ENCODE measurements at regions of chr2 and their contacts with region 1.

Region 1: DNA sequence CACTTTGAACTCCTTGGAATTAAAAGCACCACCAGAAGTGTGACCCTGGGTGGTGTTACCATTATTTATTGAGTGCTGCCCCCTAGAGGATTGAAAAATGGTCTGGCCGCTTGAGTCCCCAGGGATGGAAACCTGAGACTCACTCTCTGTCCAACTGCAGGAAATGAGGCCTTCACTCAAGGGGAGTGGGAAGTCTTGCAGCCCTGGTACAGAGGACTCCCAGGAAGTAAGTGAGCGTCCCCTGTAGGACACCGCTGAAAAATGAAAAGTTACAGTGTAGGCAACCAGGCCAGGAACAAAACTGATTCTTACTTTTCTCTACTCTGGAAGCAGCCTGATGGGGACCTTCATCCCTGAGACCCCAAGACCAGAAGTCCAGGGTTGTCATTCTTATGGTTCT is 2.2 kb upstream of the NRP2 start:
- DNase-seq: peak in 7 of 9 donors; percentile 16 to 56 (median 39)
- ATAC-seq: peak; percentile 40
- H3K4me3 ChIP-seq: no peak overlapping the region
- H3K4me3 Mint-ChIP-seq: peak overlapping the region in 6 of 10 donors; percentile 2 to 68 (median 29)
- H3K27ac ChIP-seq: no peak overlapping the region
- H3K27ac Mint-ChIP-seq: peak overlapping the region in 1 of 9 donors; percentile 9
- H3K4me1 ChIP-seq: peaks cover 0 to 4% of the 10 kb centered on the region in 2 donors
- H3K4me1 Mint-ChIP-seq: peaks cover 16 to 43% (median 24%) of the 10 kb centered on the region in 7 donors
- H3K27me3 ChIP-seq: peaks cover 3 to 8% of the 10 kb centered on the region in 2 donors
- H3K27me3 Mint-ChIP-seq: peaks cover 40 to 55% (median 44%) of the 10 kb centered on the region in 5 donors

Region 2: GRCh38 chr2:204260162-204260877 is 1419.7 kb before region 1 on chr2:
- CTCF ChIA-PET with region 1: interaction called, 10 read pairs
- POLR2A ChIA-PET with region 1: no interaction called
- intact Hi-C with region 1: loop called (anchors 1 to 5 kb)
- DNase-seq: peak in 6 of 9 donors; percentile 30 to 47 (median 36)
- ATAC-seq: peak; percentile 60
- H3K4me3 ChIP-seq: no peak overlapping the region
- H3K4me3 Mint-ChIP-seq: no peak overlapping the region
- H3K27ac ChIP-seq: no peak overlapping the region
- H3K27ac Mint-ChIP-seq: no peak overlapping the region
- H3K4me1 ChIP-seq: no peaks in the 10 kb centered on the region
- H3K4me1 Mint-ChIP-seq: peaks cover 0 to 2% (median 0%) of the 10 kb centered on the region in 7 donors
- H3K27me3 ChIP-seq: peaks cover 2 to 3% of the 10 kb centered on the region in 2 donors
- H3K27me3 Mint-ChIP-seq: peaks cover 20 to 58% (median 26%) of the 10 kb centered on the region in 5 donors

Region 3: DNA sequence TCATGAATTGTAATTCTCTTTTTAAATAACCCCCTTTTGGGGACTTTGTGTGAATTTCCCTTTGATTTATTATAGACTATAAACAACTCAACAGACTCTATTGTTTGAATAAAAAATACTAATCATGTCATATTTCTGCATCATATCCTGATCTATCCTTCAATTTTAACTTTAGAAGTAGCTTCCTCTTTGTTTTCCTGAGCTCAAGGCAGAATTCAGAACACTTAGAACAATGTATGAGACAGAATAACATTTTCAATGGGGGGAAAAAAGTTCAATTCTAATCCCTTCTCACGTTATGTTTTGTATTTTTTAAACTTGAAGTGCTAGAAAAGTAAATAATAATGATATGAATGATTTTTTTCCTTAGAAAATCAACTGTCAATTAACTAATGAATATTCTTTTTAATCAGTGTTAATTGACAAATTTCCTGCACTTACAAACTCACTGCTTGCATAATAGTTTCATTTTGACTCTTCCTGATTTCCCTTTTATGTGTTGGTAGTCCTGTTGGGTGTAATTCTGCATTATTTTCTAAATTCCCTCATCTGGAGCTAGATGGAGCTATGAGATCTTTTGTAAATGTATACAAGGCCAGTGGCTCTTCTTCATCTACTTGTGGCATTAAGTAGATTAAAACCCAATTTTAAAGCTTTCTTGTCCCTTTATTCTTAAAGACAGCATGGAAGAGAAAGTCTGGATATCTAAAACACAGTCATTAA is 808.7 kb before region 1 on chr2:
- CTCF ChIA-PET with region 1: interaction called, 48 read pairs
- POLR2A ChIA-PET with region 1: interaction called, 3 read pairs
- intact Hi-C with region 1: loop called (anchors 1 kb)
- DNase-seq: peak in 6 of 9 donors; percentile 30 to 66 (median 53)
- ATAC-seq: peak; percentile 61
- H3K4me3 ChIP-seq: no peak overlapping the region
- H3K4me3 Mint-ChIP-seq: peak overlapping the region in 5 of 10 donors; percentile 0 to 19 (median 1)
- H3K27ac ChIP-seq: no peak overlapping the region
- H3K27ac Mint-ChIP-seq: peak overlapping the region in 7 of 9 donors; percentile 0 to 44 (median 12)
- H3K4me1 ChIP-seq: peaks cover 0 to 27% of the 10 kb centered on the region in 2 donors
- H3K4me1 Mint-ChIP-seq: peaks cover 15 to 57% (median 44%) of the 10 kb centered on the region in 7 donors
- H3K27me3 ChIP-seq: no peaks in the 10 kb centered on the region
- H3K27me3 Mint-ChIP-seq: peaks cover 0 to 18% (median 0%) of the 10 kb centered on the region in 5 donors

Region 4: DNA sequence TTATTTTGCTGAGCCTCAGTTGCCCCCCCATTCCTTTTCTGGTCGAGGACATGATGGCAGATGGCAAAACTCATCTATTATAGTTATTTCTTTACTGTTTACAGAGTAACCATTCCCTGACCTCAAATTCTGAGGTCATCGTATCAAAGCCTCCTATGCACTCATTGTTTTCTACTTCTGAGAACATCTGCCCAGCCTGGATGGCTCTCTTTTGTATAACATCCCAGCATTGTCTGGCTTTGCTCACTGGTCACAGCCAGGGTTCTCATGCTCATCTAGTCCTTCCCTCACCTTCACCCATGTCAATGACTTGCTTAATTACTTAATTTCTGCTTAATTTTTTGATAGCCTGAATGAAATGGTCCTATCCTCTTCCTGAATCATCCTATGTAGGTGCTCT is 662.7 kb before region 1 on chr2:
- CTCF ChIA-PET with region 1: no interaction called
- POLR2A ChIA-PET with region 1: no interaction called
- intact Hi-C with region 1: no loop called
- DNase-seq: no peak
- ATAC-seq: no peak
- H3K4me3 ChIP-seq: no peak overlapping the region
- H3K4me3 Mint-ChIP-seq: no peak overlapping the region
- H3K27ac ChIP-seq: no peak overlapping the region
- H3K27ac Mint-ChIP-seq: peak overlapping the region in 4 of 9 donors; percentile 3 to 20 (median 6)
- H3K4me1 ChIP-seq: no peaks in the 10 kb centered on the region
- H3K4me1 Mint-ChIP-seq: peaks cover 5 to 14% (median 6%) of the 10 kb centered on the region in 7 donors
- H3K27me3 ChIP-seq: no peaks in the 10 kb centered on the region
- H3K27me3 Mint-ChIP-seq: no peaks in the 10 kb centered on the region

Region 5: DNA sequence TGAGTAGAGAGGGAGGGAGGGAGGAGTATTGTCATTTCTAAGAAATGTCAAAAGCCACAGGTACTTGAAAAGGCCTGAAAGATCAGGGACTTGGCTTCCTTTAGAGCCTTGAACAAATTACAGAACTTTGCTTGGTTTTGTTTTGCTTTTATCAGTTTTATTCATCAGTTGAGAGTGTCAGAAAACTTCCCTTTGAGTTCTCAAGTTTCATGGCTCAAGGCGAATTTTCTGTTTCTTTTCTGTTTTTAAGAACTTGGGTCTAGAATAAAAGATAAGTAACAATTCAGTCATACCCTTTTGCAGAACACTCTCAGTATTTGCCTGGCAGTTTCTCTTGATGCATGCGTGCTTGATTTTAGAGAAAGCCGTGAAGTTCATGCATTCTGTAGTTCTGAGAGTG is 602.9 kb before region 1 on chr2:
- CTCF ChIA-PET with region 1: interaction called, 4 read pairs
- POLR2A ChIA-PET with region 1: no interaction called
- intact Hi-C with region 1: loop called in 1 of 2 experiments (anchors 5 kb)
- DNase-seq: peak in 7 of 9 donors; percentile 41 to 85 (median 73)
- ATAC-seq: peak; percentile 86
- H3K4me3 ChIP-seq: no peak overlapping the region
- H3K4me3 Mint-ChIP-seq: peak overlapping the region; percentile 38 to 81 (median 70)
- H3K27ac ChIP-seq: peak overlapping the region; percentile 72
- H3K27ac Mint-ChIP-seq: peak overlapping the region; percentile 81 to 99 (median 94)
- H3K4me1 ChIP-seq: peaks cover 0 to 30% of the 10 kb centered on the region in 2 donors
- H3K4me1 Mint-ChIP-seq: peaks cover 23 to 82% (median 73%) of the 10 kb centered on the region in 7 donors
- H3K27me3 ChIP-seq: no peaks in the 10 kb centered on the region
- H3K27me3 Mint-ChIP-seq: no peaks in the 10 kb centered on the region

Region 6: GRCh38 chr2:205539601-205540000 is 140.5 kb before region 1 on chr2:
- CTCF ChIA-PET with region 1: no interaction called
- POLR2A ChIA-PET with region 1: no interaction called
- intact Hi-C with region 1: loop called in 1 of 2 experiments (anchors 10 kb)
- DNase-seq: no peak
- ATAC-seq: no peak
- H3K4me3 ChIP-seq: no peak overlapping the region
- H3K4me3 Mint-ChIP-seq: peak overlapping the region in 8 of 10 donors; percentile 6 to 70 (median 58)
- H3K27ac ChIP-seq: no peak overlapping the region
- H3K27ac Mint-ChIP-seq: peak overlapping the region in 2 of 9 donors; percentile 17 to 21
- H3K4me1 ChIP-seq: no peaks in the 10 kb centered on the region
- H3K4me1 Mint-ChIP-seq: peaks cover 7 to 25% (median 17%) of the 10 kb centered on the region in 7 donors
- H3K27me3 ChIP-seq: no peaks in the 10 kb centered on the region
- H3K27me3 Mint-ChIP-seq: peaks cover 0 to 5% (median 0%) of the 10 kb centered on the region in 5 donors

Region 7: GRCh38 chr2:205706769-205707381 is 26.8 kb after region 1 on chr2:
- CTCF ChIA-PET with region 1: interaction called, 3 read pairs
- POLR2A ChIA-PET with region 1: no interaction called
- intact Hi-C with region 1: loop called in 1 of 2 experiments (anchors 1 kb)
- DNase-seq: peak in 6 of 9 donors; percentile 17 to 53 (median 20)
- ATAC-seq: peak; percentile 93
- H3K4me3 ChIP-seq: no peak overlapping the region
- H3K4me3 Mint-ChIP-seq: peak overlapping the region in 7 of 10 donors; percentile 2 to 76 (median 23)
- H3K27ac ChIP-seq: no peak overlapping the region
- H3K27ac Mint-ChIP-seq: peak overlapping the region; percentile 71 to 98 (median 90)
- H3K4me1 ChIP-seq: peaks cover 0 to 11% of the 10 kb centered on the region in 2 donors
- H3K4me1 Mint-ChIP-seq: peaks cover 0 to 49% (median 11%) of the 10 kb centered on the region in 7 donors
- H3K27me3 ChIP-seq: no peaks in the 10 kb centered on the region
- H3K27me3 Mint-ChIP-seq: peaks cover 0 to 5% (median 0%) of the 10 kb centered on the region in 5 donors

Region 8: DNA sequence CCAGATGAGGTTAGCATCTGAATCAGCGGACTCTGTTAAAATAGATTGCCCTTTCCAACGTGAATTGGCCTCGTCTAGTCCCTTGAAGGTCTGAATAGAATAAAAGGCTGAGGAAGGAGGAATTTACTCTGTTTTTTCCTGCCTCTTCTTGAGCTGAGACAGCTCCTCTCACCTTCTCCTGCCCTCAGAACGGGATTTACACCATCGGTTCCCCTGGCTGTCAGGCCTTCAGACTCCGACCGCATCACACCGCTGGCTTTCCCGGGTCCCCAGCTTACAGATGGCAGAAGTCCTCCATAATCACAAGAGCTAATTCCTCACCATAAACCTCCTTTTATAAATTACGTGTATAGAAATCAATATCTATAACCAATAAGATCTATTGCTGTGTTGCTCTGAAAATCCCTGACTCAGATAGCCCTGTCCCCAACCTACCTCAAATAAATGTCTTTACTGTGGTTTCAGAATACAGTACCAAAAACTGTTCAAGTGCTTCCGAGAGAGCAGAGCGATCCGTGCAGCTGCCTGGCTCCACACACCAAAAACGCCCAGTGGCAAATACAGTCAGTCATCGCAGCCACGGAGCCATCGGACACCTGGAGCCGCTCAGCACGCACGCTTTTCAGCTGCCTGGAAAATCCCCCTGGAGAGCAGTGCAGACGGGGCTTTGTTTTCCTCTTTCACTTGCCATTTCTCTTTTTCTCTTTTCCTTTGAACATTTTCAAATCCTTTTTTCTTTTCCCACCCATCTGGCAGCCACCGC is 199.1 kb after region 1 on chr2:
- CTCF ChIA-PET with region 1: no interaction called
- POLR2A ChIA-PET with region 1: no interaction called
- intact Hi-C with region 1: no loop called
- DNase-seq: no peak
- ATAC-seq: no peak
- H3K4me3 ChIP-seq: no peak overlapping the region
- H3K4me3 Mint-ChIP-seq: peak overlapping the region in 1 of 10 donors; percentile 38
- H3K27ac ChIP-seq: no peak overlapping the region
- H3K27ac Mint-ChIP-seq: no peak overlapping the region
- H3K4me1 ChIP-seq: no peaks in the 10 kb centered on the region
- H3K4me1 Mint-ChIP-seq: no peaks in the 10 kb centered on the region
- H3K27me3 ChIP-seq: no peaks in the 10 kb centered on the region
- H3K27me3 Mint-ChIP-seq: peaks cover 13 to 27% (median 22%) of the 10 kb centered on the region in 5 donors

Region 9: DNA sequence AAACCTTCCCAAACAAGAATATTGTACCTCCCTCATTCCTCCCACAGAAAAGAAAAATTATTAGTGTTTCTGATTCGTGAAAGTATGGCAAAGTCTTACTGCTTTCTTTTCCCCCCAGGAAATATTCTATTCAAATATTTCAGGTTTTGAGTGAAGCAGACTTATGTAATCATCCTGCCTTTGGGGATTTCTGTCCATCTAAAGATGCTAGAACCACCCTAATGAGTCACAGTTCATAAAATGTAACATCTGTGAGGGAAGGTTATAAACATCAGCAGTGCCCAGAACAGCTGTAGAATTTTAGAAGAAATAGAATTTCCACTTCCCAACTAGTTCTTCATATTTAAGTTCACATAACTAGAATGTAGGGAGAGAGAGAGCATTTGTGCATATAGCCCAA is 518.6 kb after region 1 on chr2:
- CTCF ChIA-PET with region 1: no interaction called
- POLR2A ChIA-PET with region 1: no interaction called
- intact Hi-C with region 1: no loop called
- DNase-seq: no peak
- ATAC-seq: no peak
- H3K4me3 ChIP-seq: no peak overlapping the region
- H3K4me3 Mint-ChIP-seq: no peak overlapping the region
- H3K27ac ChIP-seq: no peak overlapping the region
- H3K27ac Mint-ChIP-seq: no peak overlapping the region
- H3K4me1 ChIP-seq: no peaks in the 10 kb centered on the region
- H3K4me1 Mint-ChIP-seq: no peaks in the 10 kb centered on the region
- H3K27me3 ChIP-seq: no peaks in the 10 kb centered on the region
- H3K27me3 Mint-ChIP-seq: peaks cover 9 to 31% (median 20%) of the 10 kb centered on the region in 5 donors